Posterior vena cava (tissue), 2 donors: ENCODE measurements at regions of chr7 and their contacts with region 1.

Region 1: DNA sequence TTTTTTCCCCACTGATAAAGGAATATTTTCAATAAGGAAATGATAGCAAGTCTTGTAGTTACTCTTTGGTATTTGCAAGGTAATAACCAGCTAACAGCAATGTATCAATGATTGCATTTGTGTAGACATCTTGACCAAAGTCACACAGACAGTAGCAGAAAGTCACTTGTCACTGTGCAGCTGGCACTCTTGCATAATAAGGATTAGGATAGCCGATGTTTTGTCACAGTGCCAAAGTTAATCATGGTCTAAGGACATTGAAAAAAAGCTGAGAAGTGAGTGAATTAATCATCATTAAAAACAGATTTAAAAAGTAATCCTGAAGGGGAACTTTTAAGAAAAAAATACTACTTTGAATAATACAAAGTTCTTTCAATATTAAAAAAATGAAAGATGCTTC is 834.3 kb upstream of the C7orf33 start:
- DNase-seq: no peak

Region 2: GRCh38 chr7:147742301-147742700 is 14.0 kb before region 1 on chr7:
- intact Hi-C with region 1: loop called in 1 of 2 experiments (anchors 1 kb)
- DNase-seq: no peak